ENCODE measurements at regions of chr10 and their contacts with region 1.

Region 1: DNA sequence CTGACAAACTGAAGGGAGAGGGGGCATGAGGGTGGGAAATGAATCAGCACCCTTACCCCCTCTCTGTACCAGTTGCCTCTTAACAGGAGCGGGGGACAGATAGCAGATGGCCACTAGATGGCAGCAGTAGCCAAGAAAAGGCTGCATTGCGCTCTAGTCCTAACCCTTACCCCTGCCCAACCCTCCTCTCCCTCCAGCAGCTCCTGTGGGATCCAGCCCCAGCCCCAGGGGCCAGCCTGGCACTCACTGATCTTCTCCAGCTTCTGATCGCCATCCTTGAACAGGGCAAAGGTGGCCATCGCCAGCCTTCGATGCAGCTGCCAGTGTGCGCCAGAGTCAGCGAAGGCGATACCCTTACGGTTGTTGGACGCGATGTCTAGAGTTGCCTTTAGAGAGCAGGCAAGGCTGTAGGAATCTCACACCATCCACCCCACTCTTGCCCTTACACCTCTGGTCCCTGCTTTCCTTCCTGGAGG is 2.2 kb downstream of the CYP17A1 start:
- DNase-seq: peak; percentile 36
- H3K4me3 ChIP-seq: no peak overlapping the region
- H3K27ac ChIP-seq: no peak overlapping the region
- H3K4me1 ChIP-seq: peaks cover 2% of the 10 kb centered on the region
- H3K27me3 ChIP-seq: no peaks in the 10 kb centered on the region
- CTCF ChIP-seq: peak; percentile 84 to 98 (median 92)

Region 2: DNA sequence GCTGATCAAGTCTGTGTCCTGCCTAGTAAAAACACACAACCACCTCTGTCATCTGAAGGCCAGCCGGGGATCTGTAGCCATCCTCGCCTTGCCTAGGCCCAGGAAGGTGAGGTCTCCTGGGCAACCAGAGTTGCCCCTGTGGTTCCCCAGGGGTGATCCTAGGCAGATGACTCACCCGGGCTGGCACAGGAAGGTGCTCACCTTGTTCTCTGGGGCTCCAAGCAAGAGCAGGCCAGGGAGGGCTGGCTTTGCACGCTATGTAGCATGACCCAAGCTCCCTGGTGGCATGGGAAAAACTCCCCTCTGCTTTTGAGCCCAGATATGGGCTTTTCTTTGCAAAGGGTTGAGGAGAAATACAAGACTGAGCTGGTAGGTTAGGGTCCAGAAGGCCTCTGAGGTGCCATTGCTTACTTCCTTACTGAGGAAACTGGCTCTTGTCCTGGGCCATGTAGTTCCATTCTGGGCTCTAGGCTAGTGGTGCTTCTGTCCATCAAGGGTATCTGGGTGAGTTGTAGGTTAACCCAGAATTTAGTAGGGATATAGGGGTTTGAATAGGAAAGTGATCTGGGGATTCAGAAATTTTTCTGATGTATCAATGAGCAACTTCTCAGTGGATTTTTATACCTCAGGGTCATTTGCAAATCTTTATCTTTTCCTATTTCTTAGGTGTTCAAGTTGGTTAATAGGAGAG is 246.0 kb after region 1 on chr10:
- dilution Hi-C with region 1: loop called (anchors 25 kb)
- DNase-seq: no peak
- H3K4me3 ChIP-seq: no peak overlapping the region
- H3K27ac ChIP-seq: no peak overlapping the region
- H3K4me1 ChIP-seq: peaks cover 4% of the 10 kb centered on the region
- H3K27me3 ChIP-seq: no peaks in the 10 kb centered on the region
- CTCF ChIP-seq: no peak

Measured in keratinocyte (primary cell).